Panc1 (cell line): ENCODE measurements at regions of chr4 and their contacts with region 1.

Region 1: GRCh38 chr4:98150092-98150761 is 7.0 kb upstream of the STPG2 start:
- DNase-seq: no peak
- ATAC-seq: no peak
- H3K4me3 ChIP-seq: no peak overlapping the region
- H3K27ac ChIP-seq: no peak overlapping the region
- H3K4me1 ChIP-seq: no peaks in the 10 kb centered on the region
- H3K27me3 ChIP-seq: no peaks in the 10 kb centered on the region
- CTCF ChIP-seq: no peak

Region 2: GRCh38 chr4:98467627-98468072 is 317.4 kb after region 1 on chr4:
- CTCF ChIA-PET with region 1: no interaction called
- POLR2A ChIA-PET with region 1: no interaction called
- in situ Hi-C with region 1: no loop called
- intact Hi-C with region 1: loop called (anchors 10 kb)
- DNase-seq: peak; percentile 67
- ATAC-seq: peak; percentile 95
- H3K4me3 ChIP-seq: peak overlapping the region; percentile 29 to 42
- H3K27ac ChIP-seq: peak overlapping the region; percentile 59; the same call in 1 of the 2 replicates
- H3K4me1 ChIP-seq: peaks cover 3% of the 10 kb centered on the region; the same call in 1 of the 2 replicates
- H3K27me3 ChIP-seq: no peaks in the 10 kb centered on the region
- CTCF ChIP-seq: peak; percentile 80

Region 3: GRCh38 chr4:98620087-98620784 is 470.0 kb after region 1 on chr4:
- CTCF ChIA-PET with region 1: no interaction called
- POLR2A ChIA-PET with region 1: no interaction called
- in situ Hi-C with region 1: no loop called
- intact Hi-C with region 1: loop called (anchors 5 kb)
- DNase-seq: no peak
- ATAC-seq: peak; percentile 68
- H3K4me3 ChIP-seq: no peak overlapping the region
- H3K27ac ChIP-seq: 0 out of 2 replicates have a peak overlapping the region, but pooled peaks have one; percentile 44
- H3K4me1 ChIP-seq: peaks cover 41% of the 10 kb centered on the region
- H3K27me3 ChIP-seq: no peaks in the 10 kb centered on the region
- CTCF ChIP-seq: no peak